HepG2 (cell line): ENCODE measurements at regions of chr3 and their contacts with region 1.

Region 1: DNA sequence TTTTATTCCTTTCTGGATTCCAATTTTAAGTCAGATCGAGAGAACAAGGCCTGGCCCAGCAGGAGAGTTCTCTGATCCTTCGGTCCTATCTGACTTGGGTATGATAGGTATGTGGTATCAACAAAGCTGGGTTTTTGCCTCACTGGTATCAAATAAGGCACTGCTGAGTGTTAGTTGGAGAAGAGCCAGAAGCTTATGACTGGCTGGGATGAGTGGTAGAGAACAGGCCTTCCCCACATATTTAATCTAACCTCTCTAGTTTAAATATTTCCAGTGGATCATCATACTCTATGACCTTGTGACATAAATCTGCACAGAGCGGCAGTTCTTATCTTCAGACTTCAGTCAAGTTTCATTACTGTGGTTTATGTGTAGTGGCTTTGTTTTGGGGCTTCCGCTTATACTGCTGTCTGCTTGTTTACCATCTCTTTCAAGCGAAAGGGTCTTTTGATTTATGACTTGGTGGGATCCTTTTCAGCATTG is 164.5 kb downstream of the PTPRG start:
- DNase-seq: peak; percentile 95
- ATAC-seq: peak; percentile 90
- H3K4me3 ChIP-seq: peak overlapping the region in 1 of 3 experiments; percentile 24; a peak in 1 of 6 replicates
- H3K27ac ChIP-seq: peak overlapping the region; percentile 76
- H3K4me1 ChIP-seq: peaks cover 75% of the 10 kb centered on the region
- H3K27me3 ChIP-seq: no peaks in the 10 kb centered on the region
- CTCF ChIP-seq: no peak
- EP300 ChIP-seq: peak in 1 of 2 experiments; percentile 84; a peak in 2 of 4 replicates
- POLR2A ChIP-seq: no peak
- RAD21 ChIP-seq: no peak

Region 2: DNA sequence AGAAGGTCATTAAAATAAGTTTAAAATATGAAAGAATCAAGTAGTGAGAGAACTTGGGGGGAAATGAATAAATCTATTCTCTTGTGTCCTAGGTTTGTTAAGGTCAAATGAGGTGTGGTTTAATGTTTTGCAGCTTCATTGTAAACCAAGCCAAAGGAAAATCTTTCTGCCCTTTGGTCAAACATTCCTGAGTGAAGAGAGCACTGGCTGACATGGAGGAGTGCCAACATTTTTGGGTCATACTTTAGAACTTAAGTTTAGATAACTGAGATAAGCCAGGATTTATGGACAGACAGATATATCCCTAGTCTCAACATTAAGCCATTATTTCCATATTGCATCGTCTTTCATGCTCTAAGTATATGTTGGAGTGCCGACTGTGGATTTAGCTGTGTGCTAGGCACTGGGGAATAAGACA is 98.1 kb before region 1 on chr3:
- CTCF ChIA-PET with region 1: no interaction called
- POLR2A ChIA-PET with region 1: no interaction called
- in situ Hi-C with region 1: no loop called
- intact Hi-C with region 1: loop called (anchors 5 kb)
- DNase-seq: peak; percentile 95
- ATAC-seq: peak; percentile 94
- H3K4me3 ChIP-seq: peak overlapping the region in 1 of 3 experiments; percentile 30; a peak in 2 of 6 replicates
- H3K27ac ChIP-seq: peak overlapping the region; percentile 74
- H3K4me1 ChIP-seq: peaks cover 54% of the 10 kb centered on the region
- H3K27me3 ChIP-seq: no peaks in the 10 kb centered on the region
- CTCF ChIP-seq: no peak
- EP300 ChIP-seq: peak in 1 of 2 experiments; percentile 65; a peak in 1 of 4 replicates
- POLR2A ChIP-seq: no peak
- RAD21 ChIP-seq: no peak

Region 3: DNA sequence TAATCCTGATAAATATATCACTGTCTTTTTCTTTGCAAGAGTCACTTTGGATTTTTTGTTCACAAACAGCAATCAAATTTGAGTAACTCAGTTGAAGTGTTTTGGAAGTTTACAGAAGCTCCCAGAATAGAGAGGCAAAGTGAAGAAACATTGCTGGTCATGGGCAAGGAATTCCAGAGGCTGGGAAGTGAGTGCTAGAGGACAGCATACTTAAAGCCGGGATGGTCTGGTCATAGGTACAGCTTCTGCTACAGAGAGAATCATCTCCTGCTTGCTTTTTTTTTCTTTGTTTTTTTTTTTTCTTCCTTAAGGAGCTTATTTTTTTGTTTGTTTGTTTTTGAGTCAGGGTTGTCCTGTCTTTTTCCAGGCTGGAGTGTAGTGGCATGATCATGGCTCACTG is 11.0 kb before region 1 on chr3:
- CTCF ChIA-PET with region 1: no interaction called
- POLR2A ChIA-PET with region 1: no interaction called
- in situ Hi-C with region 1: no loop called
- intact Hi-C with region 1: no loop called
- DNase-seq: no peak
- ATAC-seq: no peak
- H3K4me3 ChIP-seq: no peak overlapping the region
- H3K27ac ChIP-seq: no peak overlapping the region
- H3K4me1 ChIP-seq: no peaks in the 10 kb centered on the region
- H3K27me3 ChIP-seq: no peaks in the 10 kb centered on the region
- CTCF ChIP-seq: no peak
- EP300 ChIP-seq: no peak
- POLR2A ChIP-seq: no peak
- RAD21 ChIP-seq: no peak

Region 4: DNA sequence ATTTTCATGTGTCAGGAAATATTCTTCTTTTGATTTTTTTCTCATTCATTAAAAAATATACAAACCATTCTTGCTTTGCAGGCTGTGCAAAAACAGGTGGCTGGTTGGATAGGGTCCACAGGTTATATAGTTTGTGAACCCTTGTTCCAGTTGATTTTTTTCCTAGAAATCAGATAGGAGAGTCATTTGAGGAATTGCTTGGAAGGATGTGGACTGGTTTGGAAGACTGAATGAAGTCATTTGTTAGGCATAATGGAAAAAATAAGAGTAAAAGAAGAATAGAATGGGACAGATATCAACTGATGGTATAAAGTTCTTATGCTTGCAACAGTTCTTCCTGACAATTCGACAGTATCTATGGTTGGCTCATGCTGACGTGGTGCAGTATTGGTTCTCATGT is 24.9 kb after region 1 on chr3:
- CTCF ChIA-PET with region 1: no interaction called
- POLR2A ChIA-PET with region 1: no interaction called
- in situ Hi-C with region 1: no loop called
- intact Hi-C with region 1: no loop called
- DNase-seq: no peak
- ATAC-seq: no peak
- H3K4me3 ChIP-seq: no peak overlapping the region
- H3K27ac ChIP-seq: no peak overlapping the region
- H3K4me1 ChIP-seq: peaks cover 16% of the 10 kb centered on the region
- H3K27me3 ChIP-seq: no peaks in the 10 kb centered on the region
- CTCF ChIP-seq: no peak
- EP300 ChIP-seq: no peak
- POLR2A ChIP-seq: no peak
- RAD21 ChIP-seq: no peak